Breast epithelium (tissue), 4 donors: ENCODE measurements at regions of chr2 and their contacts with region 1.

Region 1: GRCh38 chr2:64330281-64331113 is 123.5 kb upstream of the LGALSL start:
- DNase-seq: peak; percentile 67
- H3K4me3 ChIP-seq: peak overlapping the region in 2 of 3 donors; percentile 23 to 36
- H3K27ac ChIP-seq: peak overlapping the region; percentile 71 to 89
- H3K4me1 ChIP-seq: peaks cover 5 to 9% of the 10 kb centered on the region in 2 donors
- H3K27me3 ChIP-seq: no peaks in the 10 kb centered on the region
- CTCF ChIP-seq: peak; percentile 92 to 96 (median 95)
- POLR2A ChIP-seq: no peak

Region 2: DNA sequence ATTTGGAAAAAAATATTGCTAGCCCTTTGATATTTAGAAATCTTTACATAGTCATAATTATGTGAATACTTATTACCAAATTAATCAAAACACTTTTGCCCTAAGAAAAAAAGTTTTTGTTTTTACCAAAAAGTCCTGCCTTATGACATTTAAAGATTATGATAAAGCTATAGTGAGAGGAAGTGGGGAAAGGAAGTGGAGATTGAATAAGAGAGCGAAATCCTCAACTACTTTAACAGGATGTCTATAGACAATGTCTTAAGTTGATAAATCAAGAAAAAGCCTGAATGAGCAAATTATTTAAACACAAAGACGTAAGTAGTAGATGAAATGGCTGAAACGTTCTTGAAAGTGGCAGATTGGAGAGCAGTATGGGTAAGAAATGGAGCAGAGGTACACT is 290.3 kb before region 1 on chr2:
- intact Hi-C with region 1: loop called (anchors 10 kb)
- DNase-seq: no peak
- H3K4me3 ChIP-seq: no peak overlapping the region
- H3K27ac ChIP-seq: no peak overlapping the region
- H3K4me1 ChIP-seq: no peaks in the 10 kb centered on the region
- H3K27me3 ChIP-seq: no peaks in the 10 kb centered on the region
- CTCF ChIP-seq: no peak
- POLR2A ChIP-seq: no peak

Region 3: DNA sequence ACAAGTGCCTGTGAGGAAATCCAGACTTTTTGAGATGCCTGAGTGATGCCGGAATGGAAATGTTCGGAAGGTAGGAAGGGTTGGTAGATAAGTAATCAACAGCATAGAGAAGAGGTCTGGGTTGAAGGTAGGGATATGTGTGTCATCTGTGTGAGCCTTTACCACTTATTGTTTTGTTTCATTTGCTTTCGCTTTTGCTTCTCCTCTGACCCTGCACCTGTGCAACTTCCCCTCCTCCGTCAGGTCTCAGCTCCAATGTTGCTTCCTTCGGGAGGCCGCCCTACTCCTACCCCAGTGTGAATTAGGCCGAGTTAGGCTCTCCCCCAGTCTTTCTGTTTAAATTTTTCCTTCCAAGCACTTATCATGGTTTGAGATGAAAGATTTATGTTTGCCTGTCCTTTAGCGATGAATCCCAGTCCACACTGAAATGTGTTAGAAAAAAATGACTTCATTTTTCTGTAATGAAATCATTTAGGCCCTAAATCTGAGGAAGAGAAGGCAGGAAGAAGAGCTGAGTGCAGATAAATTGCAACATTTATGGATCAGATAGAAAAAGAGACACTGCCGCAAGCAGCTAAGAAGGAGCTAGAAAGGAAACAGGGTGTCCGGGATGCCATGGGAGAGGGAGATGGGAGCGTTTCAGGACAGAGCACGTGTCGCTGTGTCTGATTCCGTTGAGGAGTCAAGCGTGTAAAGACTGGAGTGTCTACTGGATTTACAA is 46.7 kb before region 1 on chr2:
- intact Hi-C with region 1: no loop called
- DNase-seq: no peak
- H3K4me3 ChIP-seq: peak overlapping the region in 1 of 3 donors; percentile 7
- H3K27ac ChIP-seq: peak overlapping the region in 1 of 2 donors; percentile 70
- H3K4me1 ChIP-seq: peaks cover 0 to 3% of the 10 kb centered on the region in 2 donors
- H3K27me3 ChIP-seq: no peaks in the 10 kb centered on the region
- CTCF ChIP-seq: no peak
- POLR2A ChIP-seq: no peak

Region 4: DNA sequence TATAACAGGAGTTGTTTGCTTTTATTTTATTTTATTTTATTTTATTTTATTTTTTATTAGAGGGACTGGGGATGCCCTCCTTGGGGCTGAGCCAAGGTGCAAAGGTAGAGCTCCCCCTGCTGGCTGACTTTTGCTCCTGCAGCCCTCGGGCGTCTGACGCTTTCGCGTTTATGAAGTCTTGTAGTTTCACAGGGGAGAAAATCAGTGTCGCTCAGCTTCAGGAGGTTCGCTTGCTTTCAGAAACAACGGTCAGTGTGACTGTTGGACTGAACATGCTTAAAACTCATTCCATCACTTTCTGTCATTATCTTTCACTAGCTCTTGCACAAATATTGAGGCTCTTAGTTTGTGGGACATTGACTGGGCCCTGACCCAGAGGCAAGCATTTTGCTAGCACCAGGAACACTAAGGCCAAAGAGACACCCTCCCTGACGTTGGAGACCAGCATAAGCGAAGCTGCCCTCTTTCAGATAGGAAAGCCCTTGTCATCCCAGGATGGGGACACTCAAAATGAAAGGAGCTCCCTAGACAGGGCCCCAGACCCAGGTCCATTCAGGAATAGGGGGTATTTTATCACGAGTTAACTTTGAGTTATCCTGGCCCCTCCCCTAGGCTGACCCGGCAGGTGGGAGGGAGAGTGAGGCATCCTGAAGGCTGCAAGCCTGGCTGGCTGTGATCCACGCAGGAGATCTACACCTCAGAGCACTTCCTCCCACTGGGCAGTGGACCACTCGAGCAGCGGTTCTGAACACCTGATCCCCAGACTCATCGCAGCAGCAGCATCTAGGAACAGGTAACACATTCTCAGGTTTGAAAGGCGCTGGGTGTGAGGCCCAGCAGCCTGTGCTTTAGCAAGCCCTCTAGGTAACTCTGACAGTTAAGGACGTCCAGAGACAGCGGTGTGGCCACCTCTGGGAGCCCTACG is 157.8 kb after region 1 on chr2:
- intact Hi-C with region 1: loop called (anchors 10 kb)
- DNase-seq: peak; percentile 37 to 65
- H3K4me3 ChIP-seq: no peak overlapping the region
- H3K27ac ChIP-seq: no peak overlapping the region
- H3K4me1 ChIP-seq: no peaks in the 10 kb centered on the region
- H3K27me3 ChIP-seq: no peaks in the 10 kb centered on the region
- CTCF ChIP-seq: peak; percentile 77 to 94 (median 89)
- POLR2A ChIP-seq: no peak

Region 5: GRCh38 chr2:64562148-64562784 is 231.8 kb after region 1 on chr2:
- intact Hi-C with region 1: loop called (anchors 10 kb)
- DNase-seq: no peak
- H3K4me3 ChIP-seq: no peak overlapping the region
- H3K27ac ChIP-seq: no peak overlapping the region
- H3K4me1 ChIP-seq: no peaks in the 10 kb centered on the region
- H3K27me3 ChIP-seq: no peaks in the 10 kb centered on the region
- CTCF ChIP-seq: peak in 1 of 3 donors; percentile 32
- POLR2A ChIP-seq: no peak

Region 6: DNA sequence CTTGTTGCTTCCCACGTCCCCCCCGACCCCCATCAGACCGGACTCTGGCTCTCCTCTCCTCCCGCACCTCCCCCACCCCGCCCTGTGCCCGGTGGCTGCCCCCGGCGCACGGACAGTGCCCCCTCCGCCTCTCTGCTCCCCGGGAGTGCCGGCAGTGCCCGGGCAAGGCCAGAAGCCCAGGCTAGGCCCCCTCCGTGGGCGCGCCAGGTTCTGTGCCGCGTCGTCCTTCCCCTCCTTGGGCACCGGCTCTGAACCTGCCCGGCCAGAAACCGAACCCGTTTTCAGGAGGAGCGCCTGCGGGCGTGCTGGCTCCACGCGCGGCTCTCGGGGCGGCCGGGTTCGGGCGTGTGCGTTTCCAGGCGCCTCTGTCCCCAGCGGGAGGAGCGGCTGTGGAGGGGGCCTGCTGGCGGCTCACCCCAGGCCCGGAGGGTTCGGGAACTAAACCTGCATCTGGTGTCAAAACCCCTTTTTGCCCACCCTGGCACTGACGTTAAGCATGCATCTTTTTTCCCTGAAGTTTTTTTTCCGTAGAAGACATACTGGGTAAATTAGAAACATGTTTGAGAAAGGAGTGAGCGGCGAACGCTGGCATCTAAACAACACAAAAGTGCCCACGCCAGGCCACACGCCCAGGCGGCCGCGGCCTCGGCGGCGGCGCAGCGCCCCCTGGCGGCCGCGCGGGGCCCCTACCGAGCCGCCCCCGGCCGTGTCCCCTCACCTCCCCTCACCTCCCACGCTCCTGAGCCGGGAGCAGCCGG is 534.8 kb after region 1 on chr2:
- intact Hi-C with region 1: loop called (anchors 10 kb)
- DNase-seq: peak; percentile 65 to 76
- H3K4me3 ChIP-seq: peak overlapping the region; percentile 62 to 82 (median 63)
- H3K27ac ChIP-seq: peak overlapping the region; percentile 91 to 92
- H3K4me1 ChIP-seq: peaks cover 0 to 13% of the 10 kb centered on the region in 2 donors
- H3K27me3 ChIP-seq: no peaks in the 10 kb centered on the region
- CTCF ChIP-seq: peak in 2 of 3 donors; percentile 45 to 99
- POLR2A ChIP-seq: no peak